Activated CD4-positive, alpha-beta T cell treated with anti-CD3 and anti-CD28 coated beads, Interleukin-2, amount 10 ng/mL, durations not matched to agents 24 days and 14 days (primary cell): ENCODE measurements at regions of chr11 and their contacts with region 1.

Region 1: DNA sequence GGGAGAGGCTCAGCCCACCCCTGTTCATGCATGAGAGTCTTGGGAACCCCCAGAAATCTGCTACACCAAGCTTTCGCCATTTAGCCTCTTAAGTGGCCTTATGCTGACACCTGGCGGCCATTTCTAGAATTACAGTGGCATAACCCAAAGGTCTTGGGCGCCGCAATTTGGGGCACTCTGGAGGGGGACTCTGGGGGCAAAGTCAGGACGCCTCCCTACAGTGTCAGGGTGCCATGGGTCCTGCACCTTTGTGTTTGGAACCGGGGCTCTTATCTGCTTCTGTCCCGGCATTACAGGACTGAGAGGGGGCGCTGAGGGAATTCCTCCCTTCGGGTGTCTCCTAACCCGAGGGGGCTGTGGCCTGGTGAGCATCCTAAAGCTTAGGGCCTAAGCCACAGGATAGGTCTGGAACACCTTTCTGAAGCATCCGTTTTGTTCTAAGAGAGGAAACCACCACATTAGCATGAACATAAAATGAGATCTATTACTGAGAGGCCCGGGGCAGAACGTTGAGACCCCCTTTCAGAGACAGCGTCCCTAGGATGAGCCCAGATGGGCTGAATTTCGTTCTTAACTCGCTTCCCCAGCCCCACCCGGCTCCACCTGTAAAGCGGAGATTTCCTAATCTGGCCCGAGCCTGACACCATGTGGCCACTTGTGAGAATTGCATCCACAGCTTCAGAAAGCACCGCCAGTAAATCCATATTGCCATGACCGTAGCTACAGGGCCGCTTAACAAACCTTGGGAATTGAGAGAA is 9.3 kb downstream of the INS start:
- DNase-seq: peak; percentile 92
- H3K4me3 Mint-ChIP-seq: no peak overlapping the region
- H3K27ac Mint-ChIP-seq: no peak overlapping the region
- H3K4me1 Mint-ChIP-seq: peaks cover 3% of the 10 kb centered on the region
- H3K27me3 Mint-ChIP-seq: peaks cover 32% of the 10 kb centered on the region

Region 2: GRCh38 chr11:1597331-1598325 is 554.1 kb before region 1 on chr11 and contains the start of gene KRTAP5-2:
- intact Hi-C with region 1: no loop called
- DNase-seq: no peak
- H3K4me3 Mint-ChIP-seq: no peak within 1 kb of the TSS
- H3K27ac Mint-ChIP-seq: no peak within 1 kb of the TSS
- H3K4me1 Mint-ChIP-seq: peaks cover 2% of the 10 kb centered on the region
- H3K27me3 Mint-ChIP-seq: peaks cover 68% of the 10 kb centered on the region
- total RNA-seq, gene KRTAP5-2: not detected in 2 replicates

Region 3: DNA sequence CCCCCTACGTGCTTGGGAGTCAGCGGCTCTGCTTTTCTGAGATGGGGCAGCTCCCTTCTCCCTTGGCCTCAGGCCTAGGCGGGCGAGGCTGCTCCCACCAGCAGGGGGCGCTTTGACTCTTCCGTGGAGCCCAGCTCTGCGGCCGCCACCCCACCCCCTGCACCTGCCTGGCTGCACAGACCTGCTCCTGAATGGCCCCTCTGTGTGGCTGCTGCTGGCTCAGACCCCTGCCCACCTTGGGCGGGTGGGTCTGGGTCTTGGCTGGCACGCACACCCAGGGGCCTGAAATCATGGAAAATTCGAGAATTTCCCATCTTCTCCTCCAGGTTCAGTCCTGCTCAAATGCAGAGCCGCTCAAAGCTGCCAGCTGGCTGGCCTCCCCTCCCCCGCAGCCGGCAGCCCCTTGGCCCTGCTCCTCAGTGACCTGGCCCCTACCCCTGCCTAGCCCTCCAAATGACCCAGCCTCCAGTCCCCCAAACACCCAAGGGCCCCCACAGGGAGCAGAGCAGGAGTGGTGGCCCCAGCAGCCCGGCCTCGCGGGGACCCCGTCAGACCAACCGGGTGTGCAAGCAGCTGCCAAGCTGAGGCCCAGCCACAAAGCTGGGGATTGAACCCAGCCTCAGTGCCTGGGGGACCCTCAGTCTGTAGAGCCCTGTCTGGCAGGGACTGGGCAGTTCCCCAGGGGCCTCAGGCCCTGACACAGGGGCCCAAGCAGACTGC is 269.0 kb before region 1 on chr11:
- intact Hi-C with region 1: loop called (anchors 5 kb)
- DNase-seq: peak; percentile 92
- H3K4me3 Mint-ChIP-seq: no peak overlapping the region
- H3K27ac Mint-ChIP-seq: no peak overlapping the region
- H3K4me1 Mint-ChIP-seq: peaks cover 5% of the 10 kb centered on the region
- H3K27me3 Mint-ChIP-seq: no peaks in the 10 kb centered on the region

Region 4: DNA sequence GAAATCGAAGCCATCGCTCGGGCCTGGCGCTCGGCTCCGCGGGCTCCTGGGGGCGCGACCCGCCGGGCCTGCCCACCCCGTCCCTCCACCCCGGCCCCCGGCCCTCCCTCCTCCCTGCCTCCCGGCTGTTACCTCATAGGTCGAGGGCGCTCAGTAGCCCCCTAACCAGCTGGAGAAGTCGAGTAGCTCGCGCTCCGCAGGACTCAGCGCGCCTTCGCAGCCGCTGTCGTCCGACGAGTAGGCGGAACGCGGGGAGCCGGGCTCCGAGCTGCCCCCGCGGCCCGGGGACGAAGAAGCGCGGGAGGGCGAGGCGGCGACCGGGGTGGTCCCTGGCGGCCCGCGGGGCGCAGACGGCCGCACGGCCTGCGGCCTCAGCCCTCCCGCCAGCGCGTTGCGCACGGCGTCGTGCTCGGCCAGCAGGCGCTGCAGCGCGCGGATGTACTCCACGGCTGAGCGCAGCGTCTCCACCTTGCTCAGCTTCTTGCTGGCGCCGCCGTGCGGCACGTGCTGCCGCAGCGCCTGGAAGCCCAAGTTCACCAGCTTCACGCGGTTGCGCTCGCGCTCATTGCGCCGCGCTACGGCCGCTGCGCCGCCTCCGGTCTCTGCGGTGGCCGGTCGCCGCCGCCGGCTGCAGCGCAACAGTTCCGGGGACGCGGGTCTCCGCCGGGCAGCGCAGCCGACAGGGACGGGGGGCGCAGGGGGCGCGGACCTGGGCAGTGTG is 118.1 kb after region 1 on chr11:
- intact Hi-C with region 1: no loop called
- DNase-seq: peak; percentile 84
- H3K4me3 Mint-ChIP-seq: peak overlapping the region; percentile 70
- H3K27ac Mint-ChIP-seq: peak overlapping the region; percentile 70
- H3K4me1 Mint-ChIP-seq: peaks cover 19% of the 10 kb centered on the region
- H3K27me3 Mint-ChIP-seq: peaks cover 30% of the 10 kb centered on the region